Endothelial cell of umbilical vein (primary cell): ENCODE measurements at regions of chr1 and their contacts with region 1.

Region 1: DNA sequence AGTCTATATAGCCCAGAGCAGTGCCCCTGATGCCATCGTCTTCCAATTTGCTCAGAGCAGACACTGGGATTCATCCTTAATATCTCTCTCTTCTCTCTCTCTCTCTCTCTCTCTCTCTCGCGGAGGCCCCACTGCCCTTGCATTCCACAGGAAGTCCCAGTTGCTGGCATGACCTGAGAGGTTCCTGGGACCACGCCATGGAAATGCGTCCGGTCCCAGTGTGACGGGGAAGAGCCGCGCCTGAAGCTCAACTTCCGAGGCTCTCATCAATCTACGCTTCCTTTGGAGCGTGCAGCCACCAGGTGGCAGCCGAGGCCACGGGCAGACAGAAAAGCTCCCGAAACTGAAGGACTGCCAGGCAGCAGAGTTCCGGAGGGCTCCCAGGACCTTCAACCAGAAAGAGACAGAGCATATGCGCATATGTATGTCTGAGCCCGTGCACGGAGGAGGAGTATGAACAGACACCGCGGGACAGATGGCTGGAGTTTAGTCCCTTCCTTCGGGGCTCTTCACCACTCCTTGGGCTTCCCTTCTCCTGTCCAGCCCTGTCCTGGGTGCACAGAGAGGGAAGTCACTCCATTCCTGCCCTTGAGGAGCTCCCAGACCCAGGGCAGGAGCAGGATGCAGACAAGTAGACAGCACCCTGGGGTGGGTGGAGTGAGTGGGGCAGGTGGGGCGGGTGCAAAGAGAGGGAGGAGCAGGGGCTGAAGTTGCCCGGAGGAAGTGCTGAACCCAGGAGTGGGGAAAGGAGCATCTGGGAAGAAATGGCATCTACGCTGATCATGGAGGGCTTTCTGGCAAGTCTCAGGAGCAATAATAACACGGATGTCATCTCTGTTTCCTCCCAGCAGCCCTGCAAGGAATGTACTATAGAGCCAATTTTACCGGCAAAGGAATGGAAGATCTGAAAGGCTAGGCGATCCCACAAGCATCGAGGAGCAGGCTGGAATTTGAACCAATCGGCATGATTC is 10.5 kb downstream of the PDZK1IP1 start:
- DNase-seq: peak; percentile 91
- H3K4me3 ChIP-seq: peak overlapping the region in 2 of 3 experiments; percentile 22 to 30
- H3K27ac ChIP-seq: no peak overlapping the region
- H3K4me1 ChIP-seq: peaks cover 19% of the 10 kb centered on the region
- H3K27me3 ChIP-seq: no peaks in the 10 kb centered on the region
- CTCF ChIP-seq: peak; percentile 91 to 93
- POLR2A ChIP-seq: no peak

Region 2: GRCh38 chr1:47192458-47193384 is 13.4 kb after region 1 on chr1:
- CTCF ChIA-PET with region 1: interaction called, 68 read pairs
- POLR2A ChIA-PET with region 1: no interaction called
- dilution Hi-C with region 1: no loop called
- intact Hi-C with region 1: loop called (anchors 1 kb)
- DNase-seq: peak; percentile 76
- H3K4me3 ChIP-seq: no peak overlapping the region
- H3K27ac ChIP-seq: no peak overlapping the region
- H3K4me1 ChIP-seq: peaks cover 5% of the 10 kb centered on the region
- H3K27me3 ChIP-seq: no peaks in the 10 kb centered on the region
- CTCF ChIP-seq: peak; percentile 94 to 97
- POLR2A ChIP-seq: no peak

Region 3: GRCh38 chr1:47252369-47252768 is 73.1 kb after region 1 on chr1:
- CTCF ChIA-PET with region 1: interaction called, 12 read pairs
- POLR2A ChIA-PET with region 1: no interaction called
- dilution Hi-C with region 1: no loop called
- intact Hi-C with region 1: no loop called
- DNase-seq: peak; percentile 26
- H3K4me3 ChIP-seq: no peak overlapping the region
- H3K27ac ChIP-seq: no peak overlapping the region
- H3K4me1 ChIP-seq: no peaks in the 10 kb centered on the region
- H3K27me3 ChIP-seq: no peaks in the 10 kb centered on the region
- CTCF ChIP-seq: no peak
- POLR2A ChIP-seq: no peak

Region 4: DNA sequence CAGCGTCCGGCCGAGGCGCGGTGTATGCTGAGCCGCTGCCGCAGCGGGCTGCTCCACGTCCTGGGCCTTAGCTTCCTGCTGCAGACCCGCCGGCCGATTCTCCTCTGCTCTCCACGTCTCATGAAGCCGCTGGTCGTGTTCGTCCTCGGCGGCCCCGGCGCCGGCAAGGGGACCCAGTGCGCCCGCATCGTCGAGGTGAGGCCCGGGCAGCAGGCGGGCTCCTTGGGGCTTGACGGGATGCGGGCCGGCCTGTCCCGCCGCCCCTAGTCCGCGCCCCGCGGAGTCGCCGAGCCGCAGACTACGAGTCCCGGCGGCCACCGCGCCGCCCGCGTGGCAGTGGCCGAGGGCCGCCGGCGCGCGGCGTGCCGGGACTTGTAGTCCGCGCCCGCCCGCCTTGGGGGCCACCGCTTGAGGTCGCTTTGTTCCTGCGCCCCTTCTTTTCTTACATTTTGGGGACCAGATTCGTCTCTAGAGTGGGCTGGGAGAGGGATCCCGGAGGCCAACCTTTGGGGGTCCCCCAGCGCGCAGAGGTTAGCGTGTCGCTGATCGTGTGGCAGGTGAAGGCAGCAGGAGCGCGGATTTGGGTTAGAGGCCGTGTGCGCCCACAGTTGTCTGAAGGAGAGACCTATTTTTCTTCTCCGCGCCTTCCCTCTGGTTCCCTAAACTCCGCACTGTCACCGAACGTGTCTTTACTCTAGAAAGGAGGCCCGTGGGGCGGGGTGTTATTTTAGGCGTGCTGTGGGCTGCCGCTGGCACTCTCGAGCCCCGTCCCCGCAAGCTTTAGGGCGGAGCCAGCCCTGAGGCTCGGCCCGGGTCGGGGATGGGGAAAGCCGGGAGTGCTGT is 154.8 kb after region 1 on chr1:
- CTCF ChIA-PET with region 1: interaction called, 31 read pairs
- POLR2A ChIA-PET with region 1: interaction called, 7 read pairs
- dilution Hi-C with region 1: no loop called
- intact Hi-C with region 1: no loop called
- DNase-seq: peak; percentile 78
- H3K4me3 ChIP-seq: peak overlapping the region; percentile 85 to 94 (median 89)
- H3K27ac ChIP-seq: peak overlapping the region; percentile 87
- H3K4me1 ChIP-seq: peaks cover 28% of the 10 kb centered on the region
- H3K27me3 ChIP-seq: no peaks in the 10 kb centered on the region
- CTCF ChIP-seq: peak in 1 of 2 donors; percentile 17
- POLR2A ChIP-seq: peak; percentile 47

Region 5: DNA sequence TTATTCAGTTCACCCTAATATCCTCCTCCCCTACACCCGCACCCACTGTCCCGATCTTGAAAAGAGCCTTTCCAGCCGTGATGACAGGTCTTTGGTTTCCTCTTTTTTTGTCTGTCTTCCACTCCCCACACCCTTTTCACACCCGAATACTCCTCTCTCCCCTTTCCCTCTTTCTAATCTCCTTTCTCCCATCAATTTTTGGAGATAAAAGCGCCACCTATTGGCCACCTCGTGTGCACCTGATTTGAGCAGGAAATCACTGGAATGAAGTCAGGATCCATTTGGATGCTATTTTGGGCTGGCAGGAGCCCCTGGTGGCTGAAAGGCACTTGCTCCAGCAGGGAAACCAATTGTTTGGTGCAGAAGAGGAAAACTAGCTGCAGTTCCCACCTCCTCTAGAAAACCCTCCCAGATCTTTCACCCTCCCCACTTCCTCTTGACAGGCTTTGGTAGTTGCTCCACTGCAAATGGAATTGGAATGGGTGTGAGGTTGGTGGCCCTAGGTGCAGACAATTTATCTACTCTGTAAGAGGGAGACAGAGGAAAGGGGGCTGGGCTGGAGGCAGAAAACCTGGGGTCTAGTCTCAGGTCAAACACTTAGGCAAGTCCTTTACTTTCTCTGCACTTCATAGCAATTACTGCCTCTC is 245.2 kb after region 1 on chr1:
- CTCF ChIA-PET with region 1: interaction called, 46 read pairs
- POLR2A ChIA-PET with region 1: no interaction called
- dilution Hi-C with region 1: no loop called
- intact Hi-C with region 1: loop called (anchors 1 kb)
- DNase-seq: peak; percentile 29
- H3K4me3 ChIP-seq: no peak overlapping the region
- H3K27ac ChIP-seq: no peak overlapping the region
- H3K4me1 ChIP-seq: no peaks in the 10 kb centered on the region
- H3K27me3 ChIP-seq: peaks cover 7 to 13% of the 10 kb centered on the region in 2 experiments
- CTCF ChIP-seq: peak; percentile 72 to 83
- POLR2A ChIP-seq: no peak

Region 6: GRCh38 chr1:47656719-47657685 is 477.7 kb after region 1 on chr1:
- CTCF ChIA-PET with region 1: no interaction called
- POLR2A ChIA-PET with region 1: no interaction called
- dilution Hi-C with region 1: no loop called
- intact Hi-C with region 1: loop called (anchors 5 kb)
- DNase-seq: peak; percentile 97
- H3K4me3 ChIP-seq: no peak overlapping the region
- H3K27ac ChIP-seq: peak overlapping the region; percentile 68
- H3K4me1 ChIP-seq: peaks cover 13% of the 10 kb centered on the region
- H3K27me3 ChIP-seq: no peaks in the 10 kb centered on the region
- CTCF ChIP-seq: no peak
- POLR2A ChIP-seq: no peak